Sciatic nerve (tissue), 2 donors: ENCODE measurements at regions of chr18 and their contacts with region 1.

Region 1: GRCh38 chr18:77099485-77100370 is 32.9 kb downstream of the MBP start:
- DNase-seq: no peak
- ATAC-seq: no peak

Region 2: GRCh38 chr18:76847916-76848315 is 251.8 kb before region 1 on chr18:
- intact Hi-C with region 1: no loop called
- DNase-seq: no peak
- ATAC-seq: no peak

Region 3: GRCh38 chr18:77207540-77207939 is 107.8 kb after region 1 on chr18:
- intact Hi-C with region 1: loop called (anchors 10 kb)
- DNase-seq: peak; percentile 83
- ATAC-seq: peak; percentile 86

Region 4: GRCh38 chr18:78511666-78512601 is 1412.2 kb after region 1 on chr18:
- intact Hi-C with region 1: no loop called
- DNase-seq: peak; percentile 47
- ATAC-seq: no peak